Sigmoid colon (tissue), 7 donors: ENCODE measurements at regions of chr10 and their contacts with region 1.

Region 1: DNA sequence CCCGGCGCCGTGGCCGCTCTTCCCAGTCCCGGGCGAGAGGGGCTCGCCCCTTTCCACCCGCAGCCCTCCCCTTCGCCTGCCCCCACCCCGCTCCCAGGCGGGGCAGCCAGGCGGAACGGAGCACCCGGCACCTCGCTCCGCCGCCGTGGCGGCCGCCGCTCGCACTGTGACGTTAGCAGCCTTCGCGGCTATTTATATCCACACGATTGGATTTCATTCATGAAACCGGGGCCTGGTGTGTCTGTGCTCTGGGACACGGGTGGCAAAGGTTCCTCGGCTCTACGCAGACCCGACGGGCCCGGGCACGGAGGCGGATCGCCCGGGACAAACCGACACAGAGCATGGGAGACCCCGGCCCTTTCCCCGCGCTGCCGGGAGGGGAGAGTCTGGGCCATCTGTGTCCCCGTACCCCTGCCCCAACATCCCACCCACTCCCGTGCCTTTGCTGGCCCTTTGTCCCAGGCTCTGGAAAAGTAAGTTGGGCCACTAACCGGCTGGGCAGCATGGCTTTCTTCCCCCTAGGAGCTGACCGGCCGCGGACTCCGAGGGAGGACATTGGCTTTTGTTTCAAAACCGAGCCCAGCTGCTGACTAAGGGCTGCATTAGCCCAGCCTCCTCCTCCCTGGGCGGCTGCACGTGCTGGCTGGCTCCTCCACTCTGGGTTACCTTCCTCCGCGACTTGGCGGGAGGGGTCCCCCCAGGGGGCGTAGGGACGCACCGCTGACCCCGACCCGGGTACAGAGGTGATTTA is at the start of gene RHOBTB1:
- DNase-seq: peak; percentile 91
- H3K4me3 ChIP-seq: peak within 1 kb of the TSS; percentile 72 to 91 (median 85)
- H3K27ac ChIP-seq: peak within 1 kb of the TSS; percentile 93 to 98 (median 97)
- H3K4me1 ChIP-seq: peaks cover 0 to 36% (median 19%) of the 10 kb centered on the region in 4 donors
- H3K27me3 ChIP-seq: no peaks in the 10 kb centered on the region
- CTCF ChIP-seq: no peak
- EP300 ChIP-seq: no peak
- POLR2A ChIP-seq: peak; percentile 45 to 65
- total RNA-seq, gene RHOBTB1: 8.6 to 25.5 (median 14.3) TPM

Region 2: GRCh38 chr10:60140651-60141632 is 803.4 kb before region 1 on chr10:
- intact Hi-C with region 1: loop called (anchors 10 kb)
- DNase-seq: peak; percentile 80
- H3K4me3 ChIP-seq: peak overlapping the region; percentile 9 to 34 (median 30)
- H3K27ac ChIP-seq: peak overlapping the region; percentile 7 to 81 (median 72)
- H3K4me1 ChIP-seq: peaks cover 0 to 55% (median 36%) of the 10 kb centered on the region in 4 donors
- H3K27me3 ChIP-seq: no peaks in the 10 kb centered on the region
- CTCF ChIP-seq: no peak
- EP300 ChIP-seq: peak in 2 of 4 donors; percentile 56 to 67
- POLR2A ChIP-seq: no peak

Region 3: GRCh38 chr10:60905580-60905979 is 38.8 kb before region 1 on chr10:
- intact Hi-C with region 1: loop called (anchors 2 kb)
- DNase-seq: peak; percentile 89
- H3K4me3 ChIP-seq: no peak overlapping the region
- H3K27ac ChIP-seq: peak overlapping the region; percentile 58 to 69 (median 64)
- H3K4me1 ChIP-seq: peaks cover 0 to 50% (median 48%) of the 10 kb centered on the region in 4 donors
- H3K27me3 ChIP-seq: no peaks in the 10 kb centered on the region
- CTCF ChIP-seq: no peak
- EP300 ChIP-seq: no peak
- POLR2A ChIP-seq: no peak